T-cell (primary cell): ENCODE measurements at regions of chr2 and their contacts with region 1.

Region 1: GRCh38 chr2:196639180-196640030 is at the start of gene CCDC150:
- DNase-seq: peak; percentile 88 to 96 (median 93)
- ATAC-seq: peak; percentile 100
- H3K4me3 ChIP-seq: peak within 1 kb of the TSS; percentile 58 to 79
- H3K4me3 Mint-ChIP-seq: peak within 1 kb of the TSS; percentile 82 to 90 (median 83)
- H3K27ac ChIP-seq: no peak within 1 kb of the TSS
- H3K27ac Mint-ChIP-seq: peak within 1 kb of the TSS; percentile 36 to 46
- H3K4me1 ChIP-seq: peaks cover 6 to 12% of the 10 kb centered on the region in 2 experiments
- H3K4me1 Mint-ChIP-seq: peaks cover 13 to 22% (median 21%) of the 10 kb centered on the region in 3 donors
- H3K27me3 ChIP-seq: no peaks in the 10 kb centered on the region
- H3K27me3 Mint-ChIP-seq: no peaks in the 10 kb centered on the region
- total RNA-seq, gene CCDC150: 0.60 to 1.9 (median 1.1) TPM

Region 2: GRCh38 chr2:196660244-196660643 is 20.8 kb after region 1 on chr2:
- CTCF ChIA-PET with region 1: interaction called in 1 of 2 experiments, 11 read pairs
- POLR2A ChIA-PET with region 1: no interaction called
- DNase-seq: no peak
- ATAC-seq: no peak
- H3K4me3 ChIP-seq: no peak overlapping the region
- H3K4me3 Mint-ChIP-seq: no peak overlapping the region
- H3K27ac ChIP-seq: no peak overlapping the region
- H3K27ac Mint-ChIP-seq: no peak overlapping the region
- H3K4me1 ChIP-seq: no peaks in the 10 kb centered on the region
- H3K4me1 Mint-ChIP-seq: no peaks in the 10 kb centered on the region
- H3K27me3 ChIP-seq: no peaks in the 10 kb centered on the region
- H3K27me3 Mint-ChIP-seq: no peaks in the 10 kb centered on the region

Region 3: DNA sequence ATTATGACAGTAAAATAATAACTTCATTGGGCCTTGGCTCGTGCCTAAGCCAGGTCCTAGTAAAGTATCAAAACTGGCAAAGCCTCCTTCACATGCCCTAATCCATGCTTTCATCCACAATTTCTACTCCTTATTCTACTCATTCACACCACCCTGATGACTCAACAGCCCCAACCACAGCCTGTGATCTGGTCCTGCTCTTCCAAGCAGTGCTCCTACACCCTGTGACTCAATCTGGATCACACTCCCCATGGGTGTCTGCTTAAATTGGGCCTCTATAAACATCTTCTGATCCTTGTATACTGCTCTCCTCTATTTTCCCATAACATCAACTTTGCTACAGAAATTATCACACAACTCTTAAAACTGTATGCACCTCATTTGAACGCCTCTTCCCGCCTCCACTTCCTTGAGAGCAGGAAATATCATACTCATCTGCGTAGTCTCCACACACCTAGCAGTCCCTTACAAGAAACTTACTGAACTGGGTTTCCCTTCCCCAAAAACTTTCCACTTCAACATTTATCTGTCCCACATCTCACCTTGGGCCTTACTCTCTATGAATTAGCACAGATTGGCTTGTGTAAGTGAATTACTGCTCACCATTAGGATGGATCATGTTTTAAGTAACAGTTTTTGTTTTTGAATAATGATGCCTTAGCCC is 144.2 kb after region 1 on chr2:
- CTCF ChIA-PET with region 1: no interaction called
- POLR2A ChIA-PET with region 1: no interaction called
- DNase-seq: no peak
- ATAC-seq: peak in 1 of 4 experiments; percentile 19
- H3K4me3 ChIP-seq: no peak overlapping the region
- H3K4me3 Mint-ChIP-seq: no peak overlapping the region
- H3K27ac ChIP-seq: no peak overlapping the region
- H3K27ac Mint-ChIP-seq: peak overlapping the region in 1 of 2 donors; percentile 4
- H3K4me1 ChIP-seq: no peaks in the 10 kb centered on the region
- H3K4me1 Mint-ChIP-seq: peaks cover 8 to 10% (median 9%) of the 10 kb centered on the region in 3 donors
- H3K27me3 ChIP-seq: no peaks in the 10 kb centered on the region
- H3K27me3 Mint-ChIP-seq: no peaks in the 10 kb centered on the region